Dorsolateral prefrontal cortex (tissue), 120 donors: ENCODE measurements at regions of chr17 and their contacts with region 1.

Region 1: DNA sequence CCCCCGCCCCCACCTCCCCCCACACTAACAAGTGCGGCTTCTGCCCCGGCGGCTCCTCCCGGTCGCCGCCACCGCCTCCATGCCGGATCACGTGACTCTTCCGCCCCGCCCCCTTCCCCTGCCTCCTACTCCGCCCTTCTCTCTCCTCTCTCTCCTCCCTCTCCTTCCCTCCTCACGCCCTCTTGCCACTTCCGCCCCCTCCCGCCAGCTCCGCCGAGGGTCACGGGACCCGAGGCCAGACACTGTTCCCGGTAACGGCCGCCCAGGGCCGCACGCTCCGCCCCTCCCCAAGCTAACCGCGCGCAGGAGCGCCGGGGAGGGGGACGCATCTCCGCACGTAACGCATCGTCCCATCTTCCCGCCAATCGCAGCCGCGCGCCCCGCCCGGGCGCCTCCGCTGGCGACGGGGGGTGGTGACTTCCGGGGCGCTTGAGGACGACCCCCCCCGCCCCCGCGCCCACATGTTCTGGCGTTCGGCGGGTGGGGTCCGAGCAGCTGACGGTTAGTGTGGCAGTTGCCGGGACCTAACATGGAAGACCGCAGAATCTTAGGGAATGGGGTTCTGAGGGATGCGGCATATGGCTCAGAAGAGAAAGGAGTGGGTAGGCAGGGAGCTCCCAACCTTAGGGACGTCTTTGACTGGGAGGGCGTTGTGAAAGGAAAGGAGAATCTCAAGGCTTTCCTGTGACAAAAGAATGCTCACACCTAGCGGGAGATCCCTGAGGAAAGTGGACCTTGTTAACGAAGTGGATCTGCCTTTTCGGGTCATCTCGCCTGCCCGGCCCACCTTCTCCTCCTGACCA is at the start of gene USP32:
- DNase-seq: peak; percentile 93 to 97 (median 96)
- H3K4me3 ChIP-seq: peak within 1 kb of the TSS; percentile 65 to 98 (median 90)
- H3K27ac ChIP-seq: peak within 1 kb of the TSS; percentile 79 to 99 (median 96)
- H3K27me3 ChIP-seq: no peaks in the 10 kb centered on the region
- CTCF ChIP-seq: peak in 39 of 56 donors; percentile 1 to 49 (median 27)
- total RNA-seq, gene USP32: 74.4 to 158 (median 108) TPM

Region 2: DNA sequence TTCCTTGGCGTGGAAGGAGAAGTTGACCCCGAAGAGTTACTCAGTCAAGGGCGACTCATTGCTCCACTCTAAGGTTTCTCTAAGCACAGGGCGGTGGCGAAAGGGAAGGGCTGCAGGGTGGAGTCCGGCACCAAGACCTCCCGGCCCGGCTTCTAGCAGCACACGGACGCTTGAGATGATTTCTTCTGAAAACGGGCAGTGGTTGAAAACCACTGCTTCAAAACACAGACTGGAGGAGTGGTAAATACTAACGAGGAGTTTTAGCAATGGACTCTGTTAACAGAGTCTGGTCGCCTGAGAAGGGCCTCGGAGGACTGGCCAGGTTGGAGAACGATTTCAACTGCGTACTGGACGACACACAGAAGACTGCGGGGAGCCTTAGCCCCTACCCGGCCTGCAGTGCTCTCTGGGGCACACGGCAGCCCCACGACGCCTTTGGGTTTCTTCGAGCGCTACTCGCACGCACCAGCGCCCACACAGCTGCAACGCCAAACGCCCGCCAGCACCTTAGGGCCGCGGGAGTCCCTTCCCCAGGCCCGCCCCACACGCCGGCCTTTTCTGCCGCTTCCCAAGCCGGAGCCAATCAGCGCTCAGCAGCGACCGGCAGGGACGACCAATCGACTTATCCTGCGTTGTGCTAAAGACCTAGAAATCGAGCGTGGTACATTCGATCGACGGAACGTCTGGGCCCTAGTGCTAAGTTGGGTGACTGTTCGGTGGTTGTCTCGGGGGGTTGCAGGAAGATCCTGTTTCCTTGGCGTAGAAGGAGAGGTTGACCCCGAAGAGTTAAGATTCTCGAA is 256.9 kb before region 1 on chr17:
- intact Hi-C with region 1: loop called in 1 of 2 experiments (anchors 10 kb)
- DNase-seq: peak; percentile 79 to 96 (median 94)
- H3K4me3 ChIP-seq: peak overlapping the region; percentile 60 to 95 (median 85)
- H3K27ac ChIP-seq: peak overlapping the region in 56 of 59 donors; percentile 4 to 89 (median 71)
- H3K27me3 ChIP-seq: peaks cover 0 to 30% (median 18%) of the 10 kb centered on the region in 45 donors
- CTCF ChIP-seq: peak in 32 of 56 donors; percentile 9 to 45 (median 26)

Region 3: DNA sequence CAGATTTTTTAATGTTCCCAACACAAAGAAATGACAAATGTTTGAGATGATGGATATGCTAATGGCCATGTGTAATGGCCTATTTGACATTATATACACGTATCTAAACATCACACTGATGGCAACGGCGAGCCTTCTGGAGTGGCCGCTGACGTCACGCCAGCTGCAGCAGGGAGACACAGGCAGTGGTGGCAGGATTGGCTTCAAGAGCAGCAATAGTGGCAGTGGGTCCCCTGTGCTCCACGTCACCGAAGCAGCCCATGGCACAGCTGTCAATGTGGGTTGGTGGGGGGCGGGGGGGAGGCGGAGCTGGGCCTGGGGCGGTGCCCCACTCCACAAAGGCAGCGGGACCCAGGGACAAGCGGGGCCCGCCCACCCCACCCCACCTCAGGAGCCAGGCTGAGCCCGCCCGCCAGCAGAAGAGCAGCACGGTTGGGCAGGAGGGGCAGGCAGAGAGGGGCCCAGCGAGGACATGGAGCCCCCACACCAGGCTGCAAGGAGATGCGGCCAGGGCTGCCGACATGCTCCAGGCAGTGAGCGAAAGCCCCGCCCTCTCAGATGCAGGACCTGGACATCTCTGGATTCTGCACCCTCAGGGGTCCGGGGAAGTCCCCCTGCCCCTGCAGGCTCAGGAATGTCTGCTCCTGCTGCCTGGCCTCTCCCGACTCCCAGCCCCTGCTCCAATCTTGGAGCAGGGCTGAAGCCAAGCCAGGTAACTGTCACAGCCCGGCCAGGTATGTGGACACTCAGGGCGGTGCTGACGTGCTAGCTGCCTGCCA is 64.9 kb before region 1 on chr17:
- intact Hi-C with region 1: loop called in 1 of 2 experiments (anchors 10 kb)
- DNase-seq: peak in 9 of 10 donors; percentile 74 to 87 (median 80)
- H3K4me3 ChIP-seq: peak overlapping the region in 34 of 59 donors; percentile 1 to 46 (median 20)
- H3K27ac ChIP-seq: peak overlapping the region in 57 of 59 donors; percentile 8 to 93 (median 83)
- H3K27me3 ChIP-seq: no peaks in the 10 kb centered on the region
- CTCF ChIP-seq: no peak